AG04450 (cell line): ENCODE measurements at regions of chr14 and their contacts with region 1.

Region 1: GRCh38 chr14:45134051-45134958 is at the start of gene FKBP3:
- DNase-seq: peak; percentile 97
- H3K4me3 ChIP-seq: peak within 1 kb of the TSS; percentile 92
- H3K27ac ChIP-seq: peak within 1 kb of the TSS; percentile 72
- H3K27me3 ChIP-seq: no peaks in the 10 kb centered on the region
- CTCF ChIP-seq: peak; percentile 24; the same call in 1 of the 2 replicates
- polyA plus RNA-seq, gene FKBP3: 55.3 and 105 TPM in 2 replicates

Region 2: DNA sequence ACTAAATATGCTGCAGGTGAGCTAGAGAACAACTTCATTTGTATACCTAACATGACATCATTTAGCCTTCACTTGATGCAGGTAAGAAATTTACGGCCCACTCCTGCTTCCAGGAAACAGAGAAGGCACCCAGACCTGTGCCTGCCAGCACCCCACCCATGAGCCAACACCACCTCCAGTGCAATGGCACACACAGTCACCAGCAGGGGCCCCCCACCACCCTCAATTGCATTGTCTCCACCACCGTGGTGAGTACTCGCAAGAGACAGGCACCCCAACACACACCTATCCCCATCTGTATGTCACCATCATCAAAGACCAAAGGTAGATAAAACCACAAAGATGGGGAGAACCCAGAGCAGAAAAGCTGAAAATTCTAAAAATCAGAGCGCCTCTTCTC is 280.2 kb before region 1 on chr14:
- CTCF ChIA-PET with region 1: interaction called, 10 read pairs
- POLR2A ChIA-PET with region 1: no interaction called
- DNase-seq: no peak
- H3K4me3 ChIP-seq: no peak overlapping the region
- H3K27ac ChIP-seq: no peak overlapping the region
- H3K27me3 ChIP-seq: no peaks in the 10 kb centered on the region
- CTCF ChIP-seq: no peak

Region 3: DNA sequence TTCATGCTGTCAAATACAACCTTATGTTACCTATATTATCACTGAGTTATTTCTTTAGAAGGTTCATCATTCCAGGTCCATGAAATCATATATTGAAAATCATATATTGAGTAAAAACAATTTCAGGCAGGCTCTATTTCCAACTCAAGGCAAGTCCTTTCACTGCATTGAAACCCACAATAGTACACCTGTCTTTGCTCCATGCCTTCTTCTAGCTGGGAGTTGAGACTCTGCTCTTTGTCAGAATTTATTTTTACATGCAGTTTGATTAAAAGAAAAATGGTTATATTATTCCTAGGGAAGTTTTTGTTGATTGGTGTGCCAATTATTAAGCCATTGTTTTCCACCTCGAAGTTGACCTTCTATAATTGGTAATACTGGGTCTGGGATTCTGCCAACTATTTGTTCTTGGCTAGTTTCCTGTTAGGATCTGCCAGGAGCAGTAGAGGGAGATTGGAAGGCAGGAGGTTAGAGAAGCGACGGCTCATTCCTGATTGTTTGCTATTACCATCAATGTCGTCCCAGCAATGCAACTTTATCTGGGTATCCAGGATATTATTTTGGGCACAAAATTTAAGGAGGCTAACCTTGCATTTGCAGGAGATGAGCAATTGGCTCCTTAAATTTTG is 198.2 kb after region 1 on chr14:
- CTCF ChIA-PET with region 1: no interaction called
- POLR2A ChIA-PET with region 1: no interaction called
- DNase-seq: no peak
- H3K4me3 ChIP-seq: no peak overlapping the region
- H3K27ac ChIP-seq: no peak overlapping the region
- H3K27me3 ChIP-seq: no peaks in the 10 kb centered on the region
- CTCF ChIP-seq: no peak